PC-3 (cell line): ENCODE measurements at regions of chr17 and their contacts with region 1.

Region 1: DNA sequence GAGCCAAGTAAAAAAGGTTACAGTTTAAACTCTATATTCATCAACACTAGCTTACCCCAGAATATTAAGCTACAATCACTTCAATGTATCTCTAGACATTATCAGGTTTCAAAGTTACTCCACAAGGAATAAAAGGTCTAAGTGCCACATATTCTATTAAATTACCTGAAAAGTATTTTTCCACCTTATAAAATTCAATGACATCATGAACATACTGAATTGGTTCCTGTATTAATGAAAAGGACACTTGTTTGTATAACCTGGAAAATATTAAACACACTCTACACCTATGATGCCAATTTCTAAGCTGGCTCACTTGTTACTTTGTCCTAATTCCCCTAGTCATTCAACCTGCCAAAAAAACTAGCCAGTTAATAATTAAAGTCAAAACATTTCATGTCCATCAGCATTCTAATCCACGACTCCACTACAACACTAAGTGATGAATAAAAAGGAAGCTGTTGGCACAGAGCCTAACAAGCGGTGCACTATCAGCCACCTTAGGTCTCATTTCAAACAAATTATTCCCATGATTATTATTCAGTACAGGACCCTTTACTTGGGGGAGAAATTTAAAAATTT is 12.2 kb downstream of the MED13 start:
- DNase-seq: no peak
- ATAC-seq: no peak
- H3K4me3 ChIP-seq: no peak overlapping the region
- H3K27ac ChIP-seq: no peak overlapping the region
- H3K4me1 ChIP-seq: peaks cover 24% of the 10 kb centered on the region
- H3K27me3 ChIP-seq: no peaks in the 10 kb centered on the region
- CTCF ChIP-seq: no peak

Region 2: DNA sequence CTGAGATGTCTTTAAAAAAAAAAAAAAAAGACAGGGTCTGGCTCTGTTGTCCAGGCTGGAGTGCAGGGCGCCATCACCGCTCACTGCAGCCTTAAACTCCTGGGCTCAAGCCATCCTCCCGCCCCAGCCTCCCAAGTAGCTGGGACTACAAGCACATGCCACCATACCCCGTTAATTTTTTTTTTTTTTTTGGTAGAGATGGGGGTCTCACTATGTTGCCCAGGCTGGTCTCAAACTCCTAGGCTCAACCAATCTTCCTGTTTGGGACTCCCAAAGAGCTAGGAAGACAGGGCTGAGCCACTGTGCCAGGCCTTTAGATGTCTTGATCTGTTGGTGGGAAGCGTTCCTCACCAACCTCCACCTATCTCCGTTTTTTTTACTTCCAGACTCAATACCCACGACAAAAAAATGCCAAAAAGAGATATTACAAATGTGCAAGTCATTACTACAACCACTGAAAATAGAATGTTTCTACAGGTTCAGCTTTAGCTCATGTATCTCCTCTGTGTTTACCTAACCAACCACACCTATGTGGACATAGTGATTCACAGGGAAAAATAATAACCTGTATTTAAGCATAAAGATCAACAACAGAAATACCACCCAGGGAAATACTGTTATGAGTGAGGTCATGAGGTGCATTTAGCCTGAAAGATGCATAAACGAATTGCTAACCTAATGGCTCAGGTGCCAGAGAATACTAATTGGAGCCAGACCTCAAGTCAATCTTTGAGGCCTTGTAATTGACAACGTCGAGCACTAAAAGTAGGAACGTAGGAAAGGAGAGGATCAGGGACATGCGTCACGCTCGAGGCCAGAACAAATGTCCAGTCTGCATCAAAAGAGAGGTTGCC is 484.4 kb before region 1 on chr17:
- CTCF ChIA-PET with region 1: no interaction called
- POLR2A ChIA-PET with region 1: interaction called, 12 read pairs
- intact Hi-C with region 1: no loop called
- DNase-seq: peak; percentile 99
- ATAC-seq: peak; percentile 91
- H3K4me3 ChIP-seq: peak overlapping the region; percentile 56
- H3K27ac ChIP-seq: peak overlapping the region; percentile 97
- H3K4me1 ChIP-seq: peaks cover 36% of the 10 kb centered on the region
- H3K27me3 ChIP-seq: no peaks in the 10 kb centered on the region
- CTCF ChIP-seq: no peak

Region 3: DNA sequence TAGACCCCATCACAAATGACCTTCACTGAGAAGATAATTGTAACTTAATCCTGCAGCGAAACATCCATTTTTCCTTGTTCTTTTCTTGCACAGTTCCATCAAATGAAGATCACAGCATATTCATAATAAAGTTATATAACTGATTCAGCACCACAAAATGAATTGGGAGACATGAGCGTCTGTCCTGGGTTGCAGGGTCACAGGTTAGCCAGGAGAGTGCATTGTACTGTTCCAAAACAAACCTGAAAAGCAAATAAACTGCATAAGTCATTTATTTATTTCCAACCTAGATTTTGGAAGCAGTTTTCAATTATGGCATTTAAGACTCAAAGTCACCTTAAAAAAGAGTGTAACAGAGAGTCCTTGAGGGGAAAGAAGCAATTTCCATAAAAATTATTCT is 106.5 kb before region 1 on chr17:
- CTCF ChIA-PET with region 1: no interaction called
- POLR2A ChIA-PET with region 1: no interaction called
- intact Hi-C with region 1: loop called (anchors 5 kb)
- DNase-seq: no peak
- ATAC-seq: peak; percentile 32; the same call in 1 of the 2 replicates
- H3K4me3 ChIP-seq: no peak overlapping the region
- H3K27ac ChIP-seq: no peak overlapping the region
- H3K4me1 ChIP-seq: peaks cover 13% of the 10 kb centered on the region
- H3K27me3 ChIP-seq: no peaks in the 10 kb centered on the region
- CTCF ChIP-seq: no peak

Region 4: DNA sequence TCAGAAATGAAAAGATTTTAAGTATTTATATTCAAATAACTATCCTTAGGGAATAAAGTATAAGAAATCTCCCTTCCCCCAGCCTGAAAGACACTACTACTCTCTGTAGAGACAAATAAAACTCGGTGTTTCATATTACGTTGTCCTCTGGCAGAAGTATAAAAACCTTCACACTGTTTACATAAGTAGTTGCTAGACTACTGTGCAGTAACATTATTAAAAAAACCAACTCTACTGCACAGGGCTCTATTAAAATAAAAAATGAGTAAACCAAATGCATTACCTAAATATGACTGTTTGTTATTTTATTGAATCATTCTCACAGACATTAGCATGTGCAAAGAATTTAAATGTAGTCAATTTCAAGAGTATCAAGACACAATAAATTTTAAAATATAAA is 55.2 kb before region 1 on chr17:
- CTCF ChIA-PET with region 1: no interaction called
- POLR2A ChIA-PET with region 1: no interaction called
- intact Hi-C with region 1: loop called (anchors 5 kb)
- DNase-seq: peak; percentile 83
- ATAC-seq: peak; percentile 99
- H3K4me3 ChIP-seq: no peak overlapping the region
- H3K27ac ChIP-seq: peak overlapping the region; percentile 86
- H3K4me1 ChIP-seq: peaks cover 14% of the 10 kb centered on the region
- H3K27me3 ChIP-seq: no peaks in the 10 kb centered on the region
- CTCF ChIP-seq: no peak